Endothelial cell of umbilical vein (primary cell): ENCODE measurements at regions of chr10 and their contacts with region 1.

Region 1: DNA sequence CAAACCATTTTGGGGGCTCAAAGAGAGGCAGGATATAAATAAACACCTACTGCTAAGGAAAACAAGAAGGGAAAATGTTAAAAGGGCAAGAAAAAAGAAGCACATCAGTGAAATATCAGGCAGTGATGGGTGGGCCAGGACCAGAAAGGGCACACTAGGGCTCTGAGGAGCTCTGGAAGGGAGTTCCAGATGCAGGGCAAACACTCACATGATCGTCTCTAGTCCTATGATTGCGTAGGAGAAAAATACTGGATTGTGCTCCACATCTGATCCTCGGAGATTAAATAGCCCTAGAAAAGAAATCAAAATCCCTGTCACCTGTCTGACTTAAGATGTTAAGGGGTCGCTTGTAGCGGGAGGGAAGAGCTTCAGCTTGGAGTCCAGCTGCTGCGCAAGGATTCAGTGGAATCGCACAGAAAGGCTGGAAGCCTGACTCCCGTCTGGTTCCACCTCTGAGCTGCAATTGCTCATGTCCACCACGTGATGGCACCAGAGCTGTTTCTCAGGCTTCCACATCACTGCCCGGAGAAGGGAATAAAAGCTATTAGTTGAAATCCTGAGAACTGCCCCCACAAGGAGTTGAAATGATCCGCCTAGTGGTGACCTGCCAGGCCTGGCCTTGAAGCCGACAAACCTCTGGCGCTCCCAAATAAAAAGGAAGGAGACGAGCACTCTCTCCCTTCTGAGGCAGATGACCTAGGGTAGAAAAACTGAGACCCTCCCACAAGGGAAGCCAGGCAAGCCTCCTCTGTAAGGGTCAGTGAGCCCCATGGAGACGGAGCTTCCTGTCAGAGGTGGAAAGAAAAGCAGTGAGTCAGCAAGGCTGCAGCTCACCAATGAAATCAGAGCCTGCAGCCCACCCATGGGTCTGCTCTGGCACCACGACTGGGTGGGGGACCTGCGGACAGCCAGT is 39.2 kb downstream of the XPNPEP1 start:
- DNase-seq: peak; percentile 93
- H3K4me3 ChIP-seq: no peak overlapping the region
- H3K27ac ChIP-seq: peak overlapping the region; percentile 68
- H3K4me1 ChIP-seq: peaks cover 10% of the 10 kb centered on the region
- H3K27me3 ChIP-seq: no peaks in the 10 kb centered on the region
- CTCF ChIP-seq: peak; percentile 92 to 97
- POLR2A ChIP-seq: no peak

Region 2: GRCh38 chr10:109914966-109915365 is 30.9 kb after region 1 on chr10:
- CTCF ChIA-PET with region 1: interaction called, 23 read pairs
- POLR2A ChIA-PET with region 1: no interaction called
- dilution Hi-C with region 1: no loop called
- intact Hi-C with region 1: no loop called
- DNase-seq: peak; percentile 81
- H3K4me3 ChIP-seq: no peak overlapping the region
- H3K27ac ChIP-seq: peak overlapping the region; percentile 32
- H3K4me1 ChIP-seq: peaks cover 12% of the 10 kb centered on the region
- H3K27me3 ChIP-seq: no peaks in the 10 kb centered on the region
- CTCF ChIP-seq: no peak
- POLR2A ChIP-seq: no peak

Region 3: DNA sequence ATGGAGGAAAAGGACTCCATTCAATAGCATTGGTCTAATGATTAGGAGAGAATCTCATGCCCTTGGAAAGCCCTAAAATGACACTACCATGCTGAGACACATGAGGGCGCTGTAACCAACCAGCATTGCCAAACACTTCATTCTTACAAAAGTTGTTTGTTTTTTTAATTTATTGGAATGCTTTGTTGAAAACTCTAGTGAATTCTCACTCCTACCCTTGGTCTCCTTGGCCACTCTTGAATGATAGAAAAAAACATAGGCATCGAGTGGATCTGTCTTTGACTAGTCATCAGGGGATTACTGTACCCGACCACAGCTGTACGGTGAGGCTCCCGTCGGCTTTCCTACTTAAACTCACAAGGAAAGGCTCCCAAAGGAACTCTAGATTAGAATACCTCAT is 94.4 kb after region 1 on chr10:
- CTCF ChIA-PET with region 1: interaction called, 68 read pairs
- POLR2A ChIA-PET with region 1: no interaction called
- dilution Hi-C with region 1: no loop called
- intact Hi-C with region 1: loop called (anchors 1 kb)
- DNase-seq: peak; percentile 66
- H3K4me3 ChIP-seq: no peak overlapping the region
- H3K27ac ChIP-seq: no peak overlapping the region
- H3K4me1 ChIP-seq: no peaks in the 10 kb centered on the region
- H3K27me3 ChIP-seq: no peaks in the 10 kb centered on the region
- CTCF ChIP-seq: peak; percentile 71 to 77
- POLR2A ChIP-seq: no peak

Region 4: GRCh38 chr10:110042181-110042580 is 158.1 kb after region 1 on chr10:
- CTCF ChIA-PET with region 1: interaction called, 10 read pairs
- POLR2A ChIA-PET with region 1: interaction called, 6 read pairs
- dilution Hi-C with region 1: no loop called
- intact Hi-C with region 1: no loop called
- DNase-seq: peak; percentile 68
- H3K4me3 ChIP-seq: peak overlapping the region in 1 of 3 experiments; percentile 17
- H3K27ac ChIP-seq: no peak overlapping the region
- H3K4me1 ChIP-seq: peaks cover 10% of the 10 kb centered on the region
- H3K27me3 ChIP-seq: no peaks in the 10 kb centered on the region
- CTCF ChIP-seq: no peak
- POLR2A ChIP-seq: no peak

Region 5: GRCh38 chr10:110115784-110116520 is 231.8 kb after region 1 on chr10:
- CTCF ChIA-PET with region 1: interaction called, 13 read pairs
- POLR2A ChIA-PET with region 1: no interaction called
- dilution Hi-C with region 1: no loop called
- intact Hi-C with region 1: no loop called
- DNase-seq: no peak
- H3K4me3 ChIP-seq: no peak overlapping the region
- H3K27ac ChIP-seq: no peak overlapping the region
- H3K4me1 ChIP-seq: no peaks in the 10 kb centered on the region
- H3K27me3 ChIP-seq: no peaks in the 10 kb centered on the region
- CTCF ChIP-seq: no peak
- POLR2A ChIP-seq: no peak

Region 6: DNA sequence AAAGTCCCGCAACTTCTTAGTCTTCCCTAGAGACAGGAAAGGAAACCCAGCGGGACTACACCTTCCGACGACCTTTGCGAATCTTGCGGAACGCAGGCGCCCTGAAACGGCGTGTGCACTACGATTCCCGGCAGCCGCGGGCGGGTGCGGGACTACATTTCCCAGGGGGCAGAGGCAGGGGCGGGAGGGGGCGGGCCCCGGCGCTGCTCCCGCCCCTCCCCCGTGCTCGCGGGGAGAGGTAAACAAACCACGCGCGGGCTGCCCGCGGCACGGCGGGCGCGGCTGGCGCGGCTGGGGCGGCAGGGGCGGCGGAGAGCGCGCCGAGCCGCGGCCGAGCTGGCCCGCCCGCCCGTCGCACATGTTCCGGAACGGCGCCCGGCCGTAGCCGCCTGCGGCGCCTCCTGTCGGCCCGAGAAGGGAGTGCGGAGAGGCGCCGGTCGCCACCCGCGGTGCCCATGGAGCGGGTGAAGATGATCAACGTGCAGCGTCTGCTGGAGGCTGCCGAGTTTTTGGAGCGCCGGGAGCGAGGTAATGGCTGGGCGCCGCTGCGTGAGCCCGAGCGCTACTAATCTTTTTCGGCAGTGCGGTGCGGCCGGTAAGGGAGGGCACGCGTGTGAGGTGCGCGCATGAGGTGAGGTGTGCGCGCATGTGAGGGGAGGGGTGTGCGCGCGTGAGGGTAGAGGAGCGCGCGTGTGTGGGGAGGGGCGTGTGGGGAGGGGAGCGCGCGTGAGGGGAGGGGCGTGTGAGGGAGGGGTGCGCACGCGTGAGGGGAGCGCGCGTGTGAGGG is 341.8 kb after region 1 on chr10:
- CTCF ChIA-PET with region 1: interaction called, 25 read pairs
- POLR2A ChIA-PET with region 1: no interaction called
- dilution Hi-C with region 1: no loop called
- intact Hi-C with region 1: loop called (anchors 1 kb)
- DNase-seq: peak; percentile 89
- H3K4me3 ChIP-seq: peak overlapping the region; percentile 74 to 92 (median 75)
- H3K27ac ChIP-seq: no peak overlapping the region
- H3K4me1 ChIP-seq: peaks cover 8% of the 10 kb centered on the region
- H3K27me3 ChIP-seq: no peaks in the 10 kb centered on the region
- CTCF ChIP-seq: peak; percentile 54 to 79
- POLR2A ChIP-seq: no peak